ENCODE measurements at regions of chr7 and their contacts with region 1.

Region 1: GRCh38 chr7:2985866-2986265 is 57.8 kb downstream of the CARD11 start:
- DNase-seq: no peak
- H3K4me3 Mint-ChIP-seq: no peak overlapping the region
- H3K27ac Mint-ChIP-seq: no peak overlapping the region
- H3K4me1 Mint-ChIP-seq: peaks cover 58% of the 10 kb centered on the region
- H3K27me3 Mint-ChIP-seq: no peaks in the 10 kb centered on the region

Region 2: GRCh38 chr7:2953588-2954407 is 32.1 kb before region 1 on chr7:
- intact Hi-C with region 1: no loop called
- DNase-seq: no peak
- H3K4me3 Mint-ChIP-seq: peak overlapping the region; percentile 47
- H3K27ac Mint-ChIP-seq: peak overlapping the region; percentile 77
- H3K4me1 Mint-ChIP-seq: peaks cover 84% of the 10 kb centered on the region
- H3K27me3 Mint-ChIP-seq: no peaks in the 10 kb centered on the region

Region 3: GRCh38 chr7:3013975-3014792 is 28.3 kb after region 1 on chr7:
- intact Hi-C with region 1: loop called (anchors 2 kb)
- DNase-seq: no peak
- H3K4me3 Mint-ChIP-seq: no peak overlapping the region
- H3K27ac Mint-ChIP-seq: no peak overlapping the region
- H3K4me1 Mint-ChIP-seq: peaks cover 29% of the 10 kb centered on the region
- H3K27me3 Mint-ChIP-seq: no peaks in the 10 kb centered on the region

Measured in activated T-helper 1 cell treated with anti-CD3 and anti-CD28 coated beads, Interleukin-12 subunit alpha, Interleukin-12 subunit beta, Interleukin-2, Interleukin-4 antibody, amounts not matched to agents 30 ng/mL and 10 ng/mL and 1 ng/mL, durations not matched to agents 14 hours and 24 hours and 36 hours (primary cell).